SK-N-SH (cell line): ENCODE measurements at regions of chr17 and their contacts with region 1.

Region 1: GRCh38 chr17:42322382-42323267 is 34.3 kb downstream of the STAT5A start:
- DNase-seq: peak; percentile 90
- H3K4me3 ChIP-seq: no peak overlapping the region; a peak in 1 of 4 replicates
- H3K27ac ChIP-seq: no peak overlapping the region
- H3K4me1 ChIP-seq: peaks cover 6 to 27% of the 10 kb centered on the region in 2 experiments; a peak in 3 of 4 replicates
- H3K27me3 ChIP-seq: no peaks in the 10 kb centered on the region
- CTCF ChIP-seq: peak; percentile 99
- EP300 ChIP-seq: no peak
- RAD21 ChIP-seq: peak; percentile 99

Region 2: GRCh38 chr17:42248351-42249179 is 74.1 kb before region 1 on chr17:
- CTCF ChIA-PET with region 1: no interaction called
- POLR2A ChIA-PET with region 1: no interaction called
- DNase-seq: peak; percentile 69
- H3K4me3 ChIP-seq: peak overlapping the region; percentile 40 to 51
- H3K27ac ChIP-seq: peak overlapping the region; percentile 73 to 94
- H3K4me1 ChIP-seq: peaks cover 8 to 11% of the 10 kb centered on the region in 2 experiments; a peak in 3 of 4 replicates
- H3K27me3 ChIP-seq: no peaks in the 10 kb centered on the region
- CTCF ChIP-seq: no peak
- EP300 ChIP-seq: no peak
- RAD21 ChIP-seq: no peak

Region 3: GRCh38 chr17:42312285-42313130 is 10.1 kb before region 1 on chr17:
- CTCF ChIA-PET with region 1: interaction called, 66 read pairs
- POLR2A ChIA-PET with region 1: no interaction called
- DNase-seq: peak; percentile 93
- H3K4me3 ChIP-seq: no peak overlapping the region; a peak in 1 of 4 replicates
- H3K27ac ChIP-seq: peak overlapping the region in 1 of 2 experiments; percentile 51; a peak in 2 of 4 replicates
- H3K4me1 ChIP-seq: peaks cover 0 to 15% of the 10 kb centered on the region in 2 experiments; a peak in 2 of 4 replicates
- H3K27me3 ChIP-seq: no peaks in the 10 kb centered on the region
- CTCF ChIP-seq: peak; percentile 65
- EP300 ChIP-seq: peak in 1 of 2 experiments; percentile 2; a peak in 1 of 4 replicates
- RAD21 ChIP-seq: peak; percentile 70

Region 4: GRCh38 chr17:42334677-42335076 is 12.1 kb after region 1 on chr17:
- CTCF ChIA-PET with region 1: interaction called, 11 read pairs
- POLR2A ChIA-PET with region 1: no interaction called
- DNase-seq: no peak
- H3K4me3 ChIP-seq: no peak overlapping the region
- H3K27ac ChIP-seq: 0 out of 4 replicates have a peak overlapping the region, but pooled peaks of 1 of the 2 experiments have one; percentile 9
- H3K4me1 ChIP-seq: no peaks in the 10 kb centered on the region; a peak in 1 of 4 replicates
- H3K27me3 ChIP-seq: no peaks in the 10 kb centered on the region
- CTCF ChIP-seq: peak; percentile 53
- EP300 ChIP-seq: no peak
- RAD21 ChIP-seq: 0 out of 2 replicates have a peak, but pooled peaks have one; percentile 10

Region 5: GRCh38 chr17:42517516-42517915 is 194.9 kb after region 1 on chr17:
- CTCF ChIA-PET with region 1: interaction called, 17 read pairs
- POLR2A ChIA-PET with region 1: no interaction called
- DNase-seq: peak; percentile 87
- H3K4me3 ChIP-seq: no peak overlapping the region; a peak in 1 of 4 replicates
- H3K27ac ChIP-seq: peak overlapping the region; percentile 92 to 100
- H3K4me1 ChIP-seq: peaks cover 43 to 47% of the 10 kb centered on the region in 2 experiments
- H3K27me3 ChIP-seq: no peaks in the 10 kb centered on the region
- CTCF ChIP-seq: peak; percentile 98
- EP300 ChIP-seq: no peak
- RAD21 ChIP-seq: peak; percentile 69